Activated naive CD4-positive, alpha-beta T cell treated with anti-CD3 and anti-CD28 coated beads for 36 hours (primary cell): ENCODE measurements at regions of chr5 and their contacts with region 1.

Region 1: DNA sequence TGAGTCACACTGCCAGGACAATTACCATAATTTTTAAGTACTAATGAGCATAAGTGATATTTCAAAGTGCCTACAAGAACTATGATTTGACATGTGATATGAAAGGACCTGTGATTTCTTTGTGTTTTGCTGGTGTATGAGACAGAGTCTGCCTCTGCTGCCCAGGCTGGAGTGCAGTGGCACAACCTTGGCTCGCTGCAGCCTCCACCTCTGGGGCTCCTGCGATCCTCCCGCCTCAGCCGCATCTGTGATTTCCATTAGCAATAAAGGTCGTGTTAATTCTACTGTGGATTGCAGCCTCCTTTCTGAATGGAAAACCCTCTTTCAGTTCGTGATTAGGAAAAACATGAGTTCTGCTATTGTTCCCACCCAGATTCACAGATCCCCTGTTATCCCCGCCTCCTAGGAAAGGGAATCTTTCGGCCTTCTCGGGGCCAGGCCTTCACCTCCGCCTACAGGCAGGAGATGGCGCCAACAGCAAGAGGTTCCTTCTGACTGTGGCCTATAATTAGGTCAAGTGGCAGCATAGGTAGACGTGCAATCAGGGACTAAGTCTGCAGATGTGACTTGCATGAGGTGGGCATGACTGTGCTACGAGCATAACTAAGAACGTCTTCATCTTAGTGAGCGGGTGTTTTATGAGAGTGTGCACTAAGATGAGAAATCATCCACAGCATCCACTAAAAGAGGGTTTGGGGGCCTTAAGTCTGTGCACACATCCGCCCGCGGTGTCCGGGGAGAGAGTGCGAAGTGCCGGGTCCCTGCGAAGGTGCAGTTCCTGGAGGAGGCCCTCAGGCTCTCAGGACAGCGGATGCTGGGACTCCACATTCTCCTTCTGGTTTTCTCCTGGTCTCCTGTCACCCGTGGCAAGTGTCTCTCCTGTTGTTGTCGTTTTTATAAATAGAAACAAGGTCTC is 23.1 kb downstream of the TRIM7 start:
- DNase-seq: peak; percentile 82
- H3K4me3 Mint-ChIP-seq: peak overlapping the region; percentile 20
- H3K27ac Mint-ChIP-seq: no peak overlapping the region
- H3K4me1 Mint-ChIP-seq: peaks cover 19% of the 10 kb centered on the region
- H3K27me3 Mint-ChIP-seq: peaks cover 4% of the 10 kb centered on the region

Region 2: GRCh38 chr5:181088289-181088688 is 93.6 kb before region 1 on chr5:
- CTCF ChIA-PET with region 1: no interaction called
- intact Hi-C with region 1: no loop called
- DNase-seq: peak; percentile 22
- H3K4me3 Mint-ChIP-seq: no peak overlapping the region
- H3K27ac Mint-ChIP-seq: no peak overlapping the region
- H3K4me1 Mint-ChIP-seq: no peaks in the 10 kb centered on the region
- H3K27me3 Mint-ChIP-seq: peaks cover 29% of the 10 kb centered on the region

Region 3: DNA sequence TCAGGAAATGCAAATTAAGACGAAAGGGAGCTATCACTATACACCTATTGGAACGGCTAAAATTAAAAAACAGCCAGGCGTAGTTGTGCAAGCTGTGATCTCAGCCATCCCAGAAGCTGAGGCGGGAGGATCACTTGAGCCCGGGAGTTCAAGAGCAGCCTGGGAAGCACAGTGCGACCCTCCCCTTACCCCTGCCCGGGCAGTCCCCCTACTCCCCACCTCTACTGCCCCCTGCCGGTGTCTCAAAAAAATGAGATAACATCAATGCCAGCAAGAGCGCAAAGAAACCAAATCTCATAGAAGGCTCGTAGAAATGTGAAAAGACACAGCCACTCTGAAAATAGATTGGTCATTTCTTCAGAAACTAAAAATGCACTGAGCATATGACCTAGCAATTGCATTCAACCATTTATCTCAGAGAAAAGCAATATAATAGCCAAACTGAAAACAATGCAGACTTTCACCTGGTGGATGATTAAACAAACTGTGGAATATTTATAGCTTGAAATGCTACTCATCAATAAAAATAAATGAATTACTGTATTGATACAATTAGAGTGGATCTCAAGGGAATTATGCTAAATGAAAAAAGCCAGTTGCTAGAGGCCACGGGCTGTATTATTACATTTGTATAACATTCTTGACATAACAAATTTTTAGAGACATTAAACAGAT is 14.0 kb before region 1 on chr5:
- CTCF ChIA-PET with region 1: interaction called, 15 read pairs
- intact Hi-C with region 1: loop called (anchors 1 kb)
- DNase-seq: peak; percentile 70
- H3K4me3 Mint-ChIP-seq: peak overlapping the region; percentile 36
- H3K27ac Mint-ChIP-seq: no peak overlapping the region
- H3K4me1 Mint-ChIP-seq: peaks cover 74% of the 10 kb centered on the region
- H3K27me3 Mint-ChIP-seq: peaks cover 74% of the 10 kb centered on the region

Region 4: GRCh38 chr5:181260387-181261319 is 78.7 kb after region 1 on chr5 and contains the start of gene TRIM52:
- CTCF ChIA-PET with region 1: interaction called, 5 read pairs
- intact Hi-C with region 1: loop called (anchors 1 kb)
- DNase-seq: peak; percentile 91
- H3K4me3 Mint-ChIP-seq: peak within 1 kb of the TSS; percentile 92
- H3K27ac Mint-ChIP-seq: peak within 1 kb of the TSS; percentile 94
- H3K4me1 Mint-ChIP-seq: peaks cover 37% of the 10 kb centered on the region
- H3K27me3 Mint-ChIP-seq: no peaks in the 10 kb centered on the region
- total RNA-seq, gene TRIM52: 10.5 to 10.9 TPM

Region 5: DNA sequence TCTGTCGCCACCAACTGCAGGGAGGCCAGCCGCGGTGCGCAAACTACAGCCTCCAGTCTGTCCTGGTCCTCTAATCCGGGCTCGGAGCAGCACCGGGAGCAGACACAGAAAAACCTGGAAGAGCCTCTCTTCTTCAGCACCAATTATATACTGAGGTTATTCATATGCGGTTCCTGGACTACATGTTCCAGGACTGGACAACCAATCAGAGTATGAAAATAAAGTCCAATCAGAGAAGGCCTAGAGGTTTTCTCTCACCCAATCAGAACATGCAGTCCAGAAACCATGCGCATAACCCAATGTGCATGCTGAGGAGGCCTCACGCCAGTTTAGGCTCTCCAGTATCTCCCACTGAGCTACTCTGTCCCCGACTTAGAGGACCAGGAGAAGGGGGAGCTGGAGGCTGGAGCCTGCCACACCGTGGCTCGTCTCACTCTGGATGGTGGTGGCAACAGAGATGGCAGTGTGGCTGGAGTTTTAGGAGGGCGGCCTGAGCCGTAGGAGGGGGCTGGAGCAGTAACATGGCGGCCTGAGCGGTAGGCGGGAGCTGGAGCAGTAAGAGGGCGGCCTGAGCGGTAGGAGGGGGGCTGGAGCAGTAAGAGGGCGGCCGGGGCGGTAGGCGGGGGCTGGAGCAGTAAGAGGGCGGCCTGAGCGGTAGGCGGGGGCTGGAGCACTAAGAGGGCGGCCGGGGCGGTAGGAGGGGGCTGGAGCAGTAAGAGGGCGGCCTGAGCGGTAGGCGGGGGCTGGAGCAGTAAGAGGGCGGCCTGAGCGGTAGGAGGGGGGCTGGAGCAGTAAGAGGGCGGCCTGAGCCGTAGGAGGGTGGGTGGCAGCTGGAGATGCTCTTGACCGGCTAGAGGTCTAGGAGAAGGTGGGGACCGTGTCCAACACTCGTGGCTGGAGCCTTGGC is 99.4 kb after region 1 on chr5:
- CTCF ChIA-PET with region 1: no interaction called
- intact Hi-C with region 1: loop called (anchors 1 kb)
- DNase-seq: no peak
- H3K4me3 Mint-ChIP-seq: no peak overlapping the region
- H3K27ac Mint-ChIP-seq: no peak overlapping the region
- H3K4me1 Mint-ChIP-seq: no peaks in the 10 kb centered on the region
- H3K27me3 Mint-ChIP-seq: no peaks in the 10 kb centered on the region